H1 (cell line): ENCODE measurements at regions of chr15 and their contacts with region 1.

Region 1: DNA sequence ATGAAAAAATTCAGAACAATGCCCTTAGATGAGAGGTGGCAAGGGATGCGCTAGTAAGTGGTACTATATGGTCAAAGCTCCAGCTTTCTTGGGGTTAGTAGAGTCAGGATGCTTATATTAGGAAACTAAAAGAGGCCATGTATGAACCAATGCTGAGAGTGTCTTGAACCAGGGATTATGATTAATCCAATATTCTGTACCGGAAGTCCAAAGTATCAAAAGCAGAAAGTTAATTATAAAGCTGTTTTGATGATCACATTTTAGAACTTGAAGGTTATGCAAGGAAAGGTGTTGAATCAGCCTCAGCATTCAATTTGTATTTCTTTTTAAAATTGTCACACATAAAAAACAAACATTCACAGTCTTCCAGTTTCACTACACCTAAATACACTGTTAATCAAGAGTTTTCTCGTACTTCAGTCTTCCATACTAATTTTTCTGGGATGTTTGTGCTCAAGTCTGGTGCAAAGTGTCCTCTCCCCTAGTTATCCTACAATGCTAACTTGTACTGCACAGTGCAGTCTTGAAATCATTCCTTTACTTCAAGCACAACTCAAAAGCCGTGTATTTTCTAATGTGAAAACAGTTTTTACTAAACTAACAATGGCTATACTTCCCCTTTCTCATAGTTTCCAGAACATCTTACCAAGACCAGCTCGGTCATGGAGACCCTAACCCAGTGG is 10.7 kb upstream of the FAH start:
- DNase-seq: no peak
- H3K4me3 ChIP-seq: no peak overlapping the region
- H3K27ac ChIP-seq: no peak overlapping the region
- H3K4me1 ChIP-seq: no peaks in the 10 kb centered on the region
- H3K27me3 ChIP-seq: no peaks in the 10 kb centered on the region
- CTCF ChIP-seq: no peak
- EP300 ChIP-seq: no peak
- POLR2A ChIP-seq: no peak
- RAD21 ChIP-seq: no peak

Region 2: DNA sequence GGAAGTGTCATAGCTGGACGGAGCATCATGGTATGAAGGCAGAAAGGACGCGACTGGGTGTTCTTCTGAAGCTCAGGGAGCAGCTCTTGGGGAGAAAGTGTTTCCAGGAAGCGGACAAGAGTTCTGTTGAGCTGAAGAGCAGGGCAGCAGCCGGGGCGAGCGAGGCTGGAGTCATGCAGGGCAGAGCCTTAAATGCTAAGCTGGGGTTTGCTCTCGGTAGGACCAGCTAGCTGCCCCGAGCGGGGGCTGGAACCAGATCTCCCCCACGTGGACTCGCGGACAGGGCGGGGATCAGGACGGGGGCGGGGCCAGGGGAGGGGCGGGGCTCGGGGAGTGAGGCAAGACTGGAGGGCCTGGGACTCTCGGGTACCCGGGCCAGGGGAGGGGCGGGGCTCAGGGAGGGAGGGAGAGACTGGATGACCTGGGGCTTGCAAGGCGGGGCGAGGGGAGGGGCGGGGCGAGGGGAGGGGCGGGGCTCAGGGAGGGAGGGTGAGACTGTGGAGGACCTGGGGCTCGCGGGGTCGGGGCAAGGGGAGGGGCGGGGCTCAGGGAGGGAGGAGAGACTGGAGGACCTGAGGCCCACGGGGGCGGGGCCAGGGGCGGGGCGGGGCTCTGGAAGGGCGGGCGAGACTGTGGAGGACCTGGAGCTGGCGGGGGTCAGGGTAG is 10.3 kb after region 1 on chr15:
- CTCF ChIA-PET with region 1: interaction called, 5 read pairs
- POLR2A ChIA-PET with region 1: interaction called, 11 read pairs
- DNase-seq: peak; percentile 84 to 85
- H3K4me3 ChIP-seq: peak overlapping the region; percentile 61 to 83 (median 66)
- H3K27ac ChIP-seq: 0 out of 2 replicates have a peak overlapping the region, but pooled peaks have one; percentile 19
- H3K4me1 ChIP-seq: peaks cover 0 to 12% (median 2%) of the 10 kb centered on the region in 4 experiments; a peak in 3 of 7 replicates
- H3K27me3 ChIP-seq: peaks cover 0 to 2% (median 0%) of the 10 kb centered on the region in 4 experiments; a peak in 2 of 7 replicates
- CTCF ChIP-seq: no peak
- EP300 ChIP-seq: no peak
- POLR2A ChIP-seq: no peak; a peak in 1 of 3 replicates
- RAD21 ChIP-seq: no peak